ENCODE measurements at regions of chr5 and their contacts with region 1.

Region 1: GRCh38 chr5:14364576-14365472 is 216.8 kb upstream of the OTULINL start:
- DNase-seq: peak; percentile 44 to 86
- H3K4me3 ChIP-seq: no peak overlapping the region
- H3K27ac ChIP-seq: no peak overlapping the region
- H3K4me1 ChIP-seq: peaks cover 0 to 2% (median 0%) of the 10 kb centered on the region in 4 experiments; a peak in 1 of 7 replicates
- H3K27me3 ChIP-seq: no peaks in the 10 kb centered on the region
- CTCF ChIP-seq: peak; percentile 85 to 98 (median 97)
- EP300 ChIP-seq: no peak
- POLR2A ChIP-seq: no peak
- RAD21 ChIP-seq: peak; percentile 74 to 76

Region 2: DNA sequence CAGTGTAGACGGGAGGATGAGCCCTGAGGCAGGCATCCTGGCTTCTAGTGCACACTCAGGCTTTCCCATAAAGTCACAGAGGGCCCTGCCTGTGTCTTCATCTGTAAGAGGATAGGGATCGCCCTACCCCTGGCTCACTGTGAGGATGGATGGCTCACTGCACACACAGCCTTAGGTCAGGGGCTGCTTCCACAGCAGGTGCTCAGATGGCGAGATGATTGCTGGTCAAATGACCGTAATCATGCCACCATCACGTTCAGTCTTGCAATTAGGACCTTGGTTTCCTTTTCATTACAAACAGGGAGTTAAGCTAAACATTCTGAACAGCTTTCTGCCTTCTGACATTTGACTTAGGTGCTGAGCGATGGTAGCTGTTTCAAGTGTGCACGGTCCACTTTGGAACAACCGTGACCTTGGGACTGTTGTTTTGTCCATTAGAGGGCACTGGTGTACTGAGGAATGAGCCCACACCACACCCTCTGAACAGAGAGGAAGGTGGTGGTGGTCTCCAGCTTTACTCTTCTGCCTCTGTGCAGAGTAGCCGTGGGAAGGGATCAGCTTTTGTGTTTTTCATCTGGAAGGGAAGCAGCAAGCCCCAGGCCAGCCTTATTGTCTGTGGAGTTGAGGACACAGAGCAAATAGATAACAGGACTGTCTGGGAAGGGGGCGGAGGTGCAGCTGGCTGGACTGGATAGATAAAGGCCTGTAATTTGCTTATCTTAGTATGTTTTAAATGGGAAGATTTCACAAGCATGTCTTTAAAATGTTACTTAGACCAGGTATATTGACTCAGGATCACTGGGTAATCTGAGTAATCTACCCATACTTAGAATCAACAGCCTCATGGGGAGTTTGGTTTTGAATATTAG is 38.6 kb before region 1 on chr5:
- CTCF ChIA-PET with region 1: interaction called, 155 read pairs
- POLR2A ChIA-PET with region 1: no interaction called
- DNase-seq: no peak
- H3K4me3 ChIP-seq: no peak overlapping the region
- H3K27ac ChIP-seq: no peak overlapping the region
- H3K4me1 ChIP-seq: peaks cover 0 to 12% (median 1%) of the 10 kb centered on the region in 4 experiments; a peak in 3 of 7 replicates
- H3K27me3 ChIP-seq: no peaks in the 10 kb centered on the region
- CTCF ChIP-seq: peak; percentile 50 to 75 (median 59)
- EP300 ChIP-seq: no peak
- POLR2A ChIP-seq: no peak
- RAD21 ChIP-seq: peak; percentile 74 to 82

Region 3: GRCh38 chr5:14351845-14352712 is 12.7 kb before region 1 on chr5:
- CTCF ChIA-PET with region 1: interaction called, 51 read pairs
- POLR2A ChIA-PET with region 1: no interaction called
- DNase-seq: peak; percentile 38 to 76
- H3K4me3 ChIP-seq: no peak overlapping the region
- H3K27ac ChIP-seq: no peak overlapping the region
- H3K4me1 ChIP-seq: peaks cover under 1 to 7% (median 4%) of the 10 kb centered on the region in 4 experiments; a peak in 4 of 7 replicates
- H3K27me3 ChIP-seq: no peaks in the 10 kb centered on the region
- CTCF ChIP-seq: peak; percentile 90 to 99 (median 99)
- EP300 ChIP-seq: no peak
- POLR2A ChIP-seq: no peak
- RAD21 ChIP-seq: peak; percentile 84 to 93

Region 4: DNA sequence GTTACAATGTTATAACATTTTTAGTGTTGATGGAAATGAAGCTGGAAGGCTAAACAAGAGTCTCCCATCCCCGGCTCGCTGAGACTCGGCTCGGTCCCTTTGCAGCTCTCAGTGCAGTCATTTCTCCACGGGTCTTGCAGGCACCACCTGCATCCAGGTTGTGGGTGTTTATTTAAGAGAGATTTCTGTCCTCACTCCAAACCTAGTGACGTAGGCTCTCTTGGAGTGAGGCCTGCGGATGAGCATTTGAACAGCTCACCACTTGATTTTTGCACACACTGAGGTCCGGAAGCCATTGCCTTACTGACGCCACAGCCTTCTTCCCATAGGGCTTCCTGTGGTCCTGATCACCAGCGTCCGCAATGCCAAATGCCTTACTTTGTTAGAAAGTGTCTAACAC is 19.1 kb after region 1 on chr5:
- CTCF ChIA-PET with region 1: interaction called, 14 read pairs
- POLR2A ChIA-PET with region 1: no interaction called
- DNase-seq: no peak
- H3K4me3 ChIP-seq: no peak overlapping the region
- H3K27ac ChIP-seq: no peak overlapping the region
- H3K4me1 ChIP-seq: peaks cover 0 to 13% (median 7%) of the 10 kb centered on the region in 4 experiments; a peak in 4 of 7 replicates
- H3K27me3 ChIP-seq: no peaks in the 10 kb centered on the region
- CTCF ChIP-seq: no peak
- EP300 ChIP-seq: no peak
- POLR2A ChIP-seq: no peak
- RAD21 ChIP-seq: no peak

Region 5: GRCh38 chr5:14399054-14399692 is 34.3 kb after region 1 on chr5:
- CTCF ChIA-PET with region 1: interaction called, 12 read pairs
- POLR2A ChIA-PET with region 1: no interaction called
- DNase-seq: no peak
- H3K4me3 ChIP-seq: no peak overlapping the region
- H3K27ac ChIP-seq: 0 out of 2 replicates have a peak overlapping the region, but pooled peaks have one; percentile 13
- H3K4me1 ChIP-seq: peaks cover 0 to 4% (median 1%) of the 10 kb centered on the region in 4 experiments; a peak in 2 of 7 replicates
- H3K27me3 ChIP-seq: no peaks in the 10 kb centered on the region
- CTCF ChIP-seq: peak in 2 of 3 experiments; percentile 45 to 48; a peak in 2 of 4 replicates
- EP300 ChIP-seq: no peak
- POLR2A ChIP-seq: no peak
- RAD21 ChIP-seq: peak; percentile 43 to 53

Region 6: DNA sequence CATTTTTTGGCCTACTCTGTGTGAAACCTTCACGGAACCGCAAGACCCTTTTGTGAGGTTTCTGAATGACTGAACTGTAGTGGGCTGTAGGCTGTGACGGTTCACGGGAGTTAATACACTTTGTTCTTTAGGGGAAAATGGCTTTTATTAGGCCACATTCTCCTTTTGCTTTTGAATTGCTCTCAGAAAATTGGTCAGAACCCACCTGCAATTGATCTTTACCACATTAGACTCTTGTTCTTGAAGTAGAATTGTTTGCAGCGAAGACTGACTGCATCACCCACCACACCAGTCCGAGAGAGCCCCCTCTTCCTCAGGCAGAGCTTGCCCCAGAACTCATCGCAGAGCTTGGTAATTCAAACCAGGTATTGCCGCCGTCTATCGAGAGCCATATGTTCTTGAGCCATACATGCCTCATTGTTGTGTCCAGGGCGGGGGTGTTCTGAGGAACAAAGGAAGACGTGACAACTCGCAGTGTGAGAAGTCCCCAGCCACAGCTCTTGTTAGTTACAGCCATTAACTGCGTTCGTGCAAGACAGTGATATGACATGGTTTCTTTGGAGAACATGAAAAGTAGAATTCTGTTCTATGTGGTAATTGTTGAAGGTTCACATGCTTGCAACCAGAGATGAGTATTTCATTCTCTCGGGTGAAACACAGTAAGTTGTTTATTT is 50.3 kb after region 1 on chr5:
- CTCF ChIA-PET with region 1: interaction called, 11 read pairs
- POLR2A ChIA-PET with region 1: no interaction called
- DNase-seq: no peak
- H3K4me3 ChIP-seq: no peak overlapping the region
- H3K27ac ChIP-seq: no peak overlapping the region
- H3K4me1 ChIP-seq: peaks cover 4 to 15% (median 11%) of the 10 kb centered on the region in 4 experiments
- H3K27me3 ChIP-seq: no peaks in the 10 kb centered on the region
- CTCF ChIP-seq: no peak
- EP300 ChIP-seq: no peak
- POLR2A ChIP-seq: no peak
- RAD21 ChIP-seq: no peak

Measured in H1 (cell line).